Activated T-helper 1 cell treated with anti-CD3 and anti-CD28 coated beads, Interleukin-12 subunit alpha, Interleukin-12 subunit beta, Interleukin-2, Interleukin-4 antibody, amounts not matched to agents 30 ng/mL and 10 ng/mL and 1 ng/mL, durations not matched to agents 14 hours and 24 hours and 36 hours (primary cell): ENCODE measurements at regions of chr1 and their contacts with region 1.

Region 1: DNA sequence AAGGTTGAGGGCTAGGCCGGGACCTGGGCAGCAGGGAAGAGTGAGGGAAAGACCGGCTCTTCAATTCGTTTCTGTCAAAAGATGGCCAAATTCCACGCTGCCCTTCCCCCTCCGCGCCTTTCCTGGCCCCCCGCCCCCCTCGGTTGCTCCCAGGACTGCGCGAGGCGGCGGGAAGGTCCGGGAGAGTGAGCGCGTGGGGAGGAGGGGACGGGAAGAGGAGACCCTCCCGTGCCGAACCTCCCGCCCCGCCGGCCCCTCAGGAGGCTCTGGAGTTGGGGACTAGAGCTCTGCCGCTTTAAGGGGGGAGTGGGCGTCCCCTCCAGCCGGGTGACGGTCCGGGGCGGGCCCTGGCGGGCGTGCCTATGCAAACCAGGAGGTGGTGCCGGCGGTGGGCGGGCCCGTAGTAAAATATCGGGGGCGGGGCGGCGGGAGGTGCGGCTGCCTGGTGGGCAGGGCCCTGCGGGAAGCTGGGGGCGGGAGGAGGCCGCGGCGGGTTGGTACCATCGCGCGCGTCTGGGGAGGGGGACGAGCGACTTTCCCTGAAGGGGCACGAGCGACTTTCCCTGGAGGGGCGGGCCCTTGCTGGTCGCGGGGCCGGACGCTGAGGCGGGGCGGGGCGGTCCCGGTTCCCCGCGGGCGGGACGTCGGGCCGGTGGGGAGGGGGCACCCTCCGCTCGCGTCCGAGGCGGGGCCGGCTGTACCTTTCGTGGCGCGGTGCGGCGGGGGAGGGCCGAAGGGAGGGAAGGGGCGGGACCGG is 58.2 kb downstream of the BCL9 start:
- DNase-seq: peak; percentile 89
- H3K4me3 Mint-ChIP-seq: peak overlapping the region; percentile 87
- H3K27ac Mint-ChIP-seq: peak overlapping the region; percentile 79
- H3K4me1 Mint-ChIP-seq: peaks cover 34% of the 10 kb centered on the region
- H3K27me3 Mint-ChIP-seq: peaks cover 20% of the 10 kb centered on the region

Region 2: DNA sequence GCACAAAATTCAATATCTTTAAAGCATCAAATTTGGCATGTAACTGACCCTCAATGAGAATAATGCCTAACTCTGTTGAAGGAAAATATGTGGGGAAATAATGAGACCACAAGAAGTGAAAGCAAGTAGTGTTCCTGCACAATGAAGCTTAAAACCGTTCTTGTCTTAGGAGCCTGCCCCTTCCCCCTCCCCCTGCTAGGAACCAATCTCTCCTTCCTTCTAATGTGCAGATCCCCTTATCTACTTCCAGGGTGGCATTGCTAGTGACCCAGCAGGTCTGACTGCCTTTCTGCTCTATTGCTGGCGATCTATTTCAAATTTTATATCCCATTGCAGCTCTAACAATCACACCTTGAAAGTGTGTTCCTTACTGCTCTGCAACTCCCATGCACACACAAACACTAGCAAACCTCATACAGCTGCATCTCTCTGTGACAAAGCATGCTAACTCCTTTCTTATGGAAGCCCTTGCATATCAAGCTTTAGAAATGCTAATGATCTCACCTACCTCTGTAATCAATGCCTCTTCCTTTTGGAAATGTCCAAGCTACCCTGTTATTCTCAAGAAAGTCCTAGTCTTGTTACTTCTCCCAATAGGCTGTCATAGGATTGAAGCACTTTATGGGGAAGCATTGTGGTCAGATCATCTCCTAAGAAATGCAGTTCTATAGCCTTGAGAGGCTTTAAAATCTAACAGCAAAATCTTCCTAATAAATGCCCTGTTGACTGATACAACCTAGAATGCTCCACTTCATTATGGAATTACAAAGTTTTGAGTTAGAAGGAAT is 31.8 kb before region 1 on chr1:
- intact Hi-C with region 1: no loop called
- DNase-seq: no peak
- H3K4me3 Mint-ChIP-seq: no peak overlapping the region
- H3K27ac Mint-ChIP-seq: no peak overlapping the region
- H3K4me1 Mint-ChIP-seq: peaks cover 10% of the 10 kb centered on the region
- H3K27me3 Mint-ChIP-seq: peaks cover 5% of the 10 kb centered on the region

Region 3: GRCh38 chr1:147627435-147628110 is 28.0 kb after region 1 on chr1:
- intact Hi-C with region 1: loop called (anchors 1 kb)
- DNase-seq: peak; percentile 20
- H3K4me3 Mint-ChIP-seq: no peak overlapping the region
- H3K27ac Mint-ChIP-seq: no peak overlapping the region
- H3K4me1 Mint-ChIP-seq: peaks cover 36% of the 10 kb centered on the region
- H3K27me3 Mint-ChIP-seq: no peaks in the 10 kb centered on the region

Region 4: DNA sequence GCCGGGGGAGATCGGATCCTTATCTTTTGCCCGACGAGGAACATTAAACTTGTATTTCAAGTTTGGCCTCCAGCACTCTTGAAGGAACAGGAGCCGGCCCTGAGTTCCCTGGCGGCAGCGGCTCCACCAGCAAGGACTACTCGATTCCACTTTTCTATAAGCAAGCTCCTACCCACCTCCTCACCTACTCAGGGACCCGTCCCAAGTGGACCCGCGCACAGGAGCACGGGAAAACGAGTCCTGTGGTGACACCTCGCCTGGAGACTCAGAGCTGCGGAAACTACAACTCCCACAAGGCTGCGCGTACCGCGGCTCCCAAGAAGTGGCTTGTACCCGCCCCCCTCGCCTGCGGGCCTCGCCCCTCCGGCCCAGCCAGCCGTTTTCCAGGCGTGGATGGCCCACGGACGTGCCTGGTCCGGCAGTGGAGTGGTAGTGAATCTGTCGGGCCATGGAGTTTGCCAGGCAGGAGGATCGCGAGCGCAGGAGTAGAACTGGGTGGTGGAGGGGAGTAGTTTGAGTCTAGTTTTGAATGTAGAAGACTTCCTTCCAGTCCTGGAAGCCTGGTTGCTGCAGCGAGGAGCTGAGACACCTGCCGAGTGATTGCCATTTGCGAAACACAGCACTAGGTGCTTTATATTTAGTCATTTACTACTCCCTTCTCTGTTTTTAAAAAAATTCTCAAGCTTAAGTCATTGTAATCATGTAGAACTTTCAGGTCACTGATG is 70.9 kb after region 1 on chr1 and contains the start of gene ACP6:
- intact Hi-C with region 1: loop called (anchors 1 kb)
- DNase-seq: peak; percentile 86
- H3K4me3 Mint-ChIP-seq: peak within 1 kb of the TSS; percentile 92
- H3K27ac Mint-ChIP-seq: peak within 1 kb of the TSS; percentile 88
- H3K4me1 Mint-ChIP-seq: peaks cover 24% of the 10 kb centered on the region
- H3K27me3 Mint-ChIP-seq: peaks cover 24% of the 10 kb centered on the region
- total RNA-seq, gene ACP6: 14.1 and 14.7 TPM in 2 replicates